ACHN (cell line): ENCODE measurements at regions of chr16 and their contacts with region 1.

Region 1: GRCh38 chr16:35339337-35339736 is 1879.9 kb downstream of the TP53TG3F start:
- DNase-seq: peak; percentile 16

Region 2: GRCh38 chr16:35102780-35103403 is 236.4 kb before region 1 on chr16:
- in situ Hi-C with region 1: no loop called
- DNase-seq: peak; percentile 61

Region 3: DNA sequence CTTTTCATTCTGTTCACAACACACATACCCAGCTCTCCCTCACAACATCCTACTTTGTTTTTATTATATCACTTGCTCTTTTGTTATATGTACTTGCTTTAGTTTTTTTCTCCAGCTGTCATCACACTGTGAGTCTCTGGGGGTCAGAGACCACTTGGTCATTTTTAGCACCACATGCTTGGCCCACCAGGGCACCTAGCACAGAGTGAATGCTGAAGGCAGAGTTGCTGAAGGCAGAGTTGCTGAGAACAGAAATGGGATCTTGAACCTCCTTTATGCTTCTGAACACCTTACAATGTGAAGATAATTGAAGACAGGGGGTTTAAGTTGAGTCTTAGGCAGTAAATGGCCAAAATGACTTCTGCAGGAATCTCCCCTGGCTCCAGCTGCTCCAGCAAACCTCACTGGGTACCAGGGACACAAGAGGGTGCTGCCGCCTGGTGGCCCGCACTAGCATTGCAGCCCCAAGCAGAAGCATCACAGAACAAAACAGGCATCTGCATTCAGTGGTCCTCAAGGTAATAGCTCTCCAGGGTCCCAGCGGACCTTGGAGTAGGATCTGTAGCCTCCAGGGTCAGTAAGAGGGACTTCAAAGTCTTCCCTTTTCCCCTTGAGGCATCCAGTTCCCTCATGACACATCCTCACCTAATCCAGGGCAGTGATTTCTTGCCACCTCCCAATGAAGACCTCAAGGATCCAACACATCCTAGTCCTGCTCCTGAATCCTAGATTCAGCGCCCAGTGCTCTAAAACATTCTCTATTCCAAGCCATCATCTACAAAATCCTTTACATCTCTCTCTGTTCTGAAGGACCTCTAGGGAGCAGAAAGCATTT is 92.7 kb after region 1 on chr16:
- in situ Hi-C with region 1: loop called (anchors 25 kb)
- DNase-seq: peak; percentile 47

Region 4: DNA sequence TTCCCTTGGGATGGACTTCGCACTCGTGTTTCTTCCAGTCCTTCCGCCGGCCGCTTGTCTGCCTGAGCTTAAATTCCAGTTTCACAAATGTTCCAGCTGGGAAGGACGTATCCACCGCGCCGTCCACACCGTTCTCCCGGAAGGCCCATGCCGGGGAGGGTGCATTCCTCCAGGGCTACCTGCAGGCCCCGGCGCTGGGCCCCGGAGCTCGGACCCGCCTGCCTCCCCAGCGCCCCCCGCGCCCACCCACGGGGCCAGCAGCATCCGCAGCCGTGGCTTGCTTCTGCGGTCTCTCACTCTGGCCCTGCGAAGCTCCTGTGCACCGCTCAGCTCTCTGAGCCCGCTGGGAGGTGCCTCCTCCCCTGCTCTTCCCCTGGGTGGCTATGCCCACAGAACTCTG is 204.1 kb after region 1 on chr16:
- in situ Hi-C with region 1: no loop called
- DNase-seq: no peak